Ovary (tissue), 10 donors: ENCODE measurements at regions of chr2 and their contacts with region 1.

Region 1: GRCh38 chr2:142190805-142191204 is 60.0 kb upstream of the LRP1B start:
- DNase-seq: no peak
- H3K4me3 ChIP-seq: no peak overlapping the region
- H3K27ac ChIP-seq: no peak overlapping the region
- H3K4me1 ChIP-seq: no peaks in the 10 kb centered on the region
- H3K27me3 ChIP-seq: no peaks in the 10 kb centered on the region
- CTCF ChIP-seq: no peak
- EP300 ChIP-seq: no peak
- POLR2A ChIP-seq: no peak

Region 2: GRCh38 chr2:142170847-142171246 is 20.0 kb before region 1 on chr2:
- intact Hi-C with region 1: loop called in 1 of 4 experiments (anchors 1 kb)
- DNase-seq: no peak
- H3K4me3 ChIP-seq: no peak overlapping the region
- H3K27ac ChIP-seq: no peak overlapping the region
- H3K4me1 ChIP-seq: no peaks in the 10 kb centered on the region
- H3K27me3 ChIP-seq: no peaks in the 10 kb centered on the region
- CTCF ChIP-seq: no peak
- EP300 ChIP-seq: no peak
- POLR2A ChIP-seq: no peak

Region 3: GRCh38 chr2:142395291-142395690 is 204.5 kb after region 1 on chr2:
- intact Hi-C with region 1: no loop called
- DNase-seq: no peak
- H3K4me3 ChIP-seq: no peak overlapping the region
- H3K27ac ChIP-seq: no peak overlapping the region
- H3K4me1 ChIP-seq: no peaks in the 10 kb centered on the region
- H3K27me3 ChIP-seq: no peaks in the 10 kb centered on the region
- CTCF ChIP-seq: no peak
- EP300 ChIP-seq: no peak
- POLR2A ChIP-seq: no peak